ENCODE measurements at regions of chr12 and their contacts with region 1.

Region 1: DNA sequence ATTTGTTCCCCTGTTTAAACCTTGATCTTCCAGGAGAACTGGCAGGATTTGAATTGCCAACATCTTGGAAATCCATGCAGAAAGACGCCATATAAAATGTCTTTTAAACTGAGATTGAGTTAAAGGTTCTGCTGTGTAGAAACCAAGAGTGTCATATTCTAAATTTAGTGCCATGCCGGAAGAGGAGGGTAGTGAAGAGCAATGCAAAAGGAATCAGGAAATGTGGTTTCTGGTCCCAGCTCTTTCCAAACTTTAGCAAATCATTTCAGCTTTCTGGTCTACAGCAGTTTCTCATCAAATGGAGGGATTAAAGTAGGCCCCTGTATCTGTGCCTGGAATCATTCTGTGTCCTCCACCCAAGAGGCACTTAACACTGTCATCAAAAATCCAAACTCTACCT is 85.7 kb downstream of the BTG1 start:
- DNase-seq: no peak
- ATAC-seq: no peak
- H3K4me3 Mint-ChIP-seq: peak overlapping the region; percentile 42
- H3K27ac Mint-ChIP-seq: peak overlapping the region; percentile 35
- H3K4me1 Mint-ChIP-seq: peaks cover 90% of the 10 kb centered on the region
- H3K27me3 Mint-ChIP-seq: no peaks in the 10 kb centered on the region

Region 2: DNA sequence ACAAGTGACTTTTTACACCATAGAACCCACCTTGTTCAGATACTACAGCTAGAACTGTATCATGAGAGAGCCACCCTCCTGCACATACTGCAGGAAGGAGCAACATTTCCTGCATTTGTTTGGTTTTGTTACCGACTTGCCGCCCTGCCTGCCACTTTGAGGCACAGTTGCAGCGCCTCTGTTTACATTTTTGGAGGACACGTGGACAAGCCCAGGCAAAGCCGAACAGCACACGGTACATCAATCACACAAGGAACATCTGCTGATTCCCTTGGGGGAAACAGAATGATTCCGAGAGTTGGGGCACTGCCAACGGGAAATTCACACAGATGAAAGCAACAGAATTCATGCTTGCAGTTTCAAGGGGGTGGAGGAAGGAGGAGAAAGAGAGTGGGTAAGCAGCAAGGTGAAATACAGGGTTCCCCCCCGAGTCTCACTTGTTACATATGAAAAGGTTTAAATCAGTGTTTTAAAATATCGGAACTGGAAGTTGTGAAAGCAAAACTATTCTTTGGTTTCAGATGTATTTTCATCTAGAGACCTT is 25.0 kb before region 1 on chr12:
- CTCF ChIA-PET with region 1: interaction called, 8 read pairs
- POLR2A ChIA-PET with region 1: no interaction called
- intact Hi-C with region 1: loop called (anchors 2 kb)
- DNase-seq: peak; percentile 55
- ATAC-seq: peak; percentile 48
- H3K4me3 Mint-ChIP-seq: peak overlapping the region; percentile 72
- H3K27ac Mint-ChIP-seq: peak overlapping the region; percentile 92
- H3K4me1 Mint-ChIP-seq: peaks cover 83% of the 10 kb centered on the region
- H3K27me3 Mint-ChIP-seq: no peaks in the 10 kb centered on the region

Region 3: GRCh38 chr12:92094751-92095161 is 34.8 kb after region 1 on chr12:
- CTCF ChIA-PET with region 1: interaction called, 3 read pairs
- POLR2A ChIA-PET with region 1: no interaction called
- intact Hi-C with region 1: loop called in 1 of 2 experiments (anchors 5 kb)
- DNase-seq: no peak
- ATAC-seq: no peak
- H3K4me3 Mint-ChIP-seq: no peak overlapping the region
- H3K27ac Mint-ChIP-seq: no peak overlapping the region
- H3K4me1 Mint-ChIP-seq: peaks cover 31% of the 10 kb centered on the region
- H3K27me3 Mint-ChIP-seq: no peaks in the 10 kb centered on the region